Activated CD4-positive, alpha-beta memory T cell treated with anti-CD3 and anti-CD28 coated beads for 36 hours (primary cell): ENCODE measurements at regions of chr4 and their contacts with region 1.

Region 1: DNA sequence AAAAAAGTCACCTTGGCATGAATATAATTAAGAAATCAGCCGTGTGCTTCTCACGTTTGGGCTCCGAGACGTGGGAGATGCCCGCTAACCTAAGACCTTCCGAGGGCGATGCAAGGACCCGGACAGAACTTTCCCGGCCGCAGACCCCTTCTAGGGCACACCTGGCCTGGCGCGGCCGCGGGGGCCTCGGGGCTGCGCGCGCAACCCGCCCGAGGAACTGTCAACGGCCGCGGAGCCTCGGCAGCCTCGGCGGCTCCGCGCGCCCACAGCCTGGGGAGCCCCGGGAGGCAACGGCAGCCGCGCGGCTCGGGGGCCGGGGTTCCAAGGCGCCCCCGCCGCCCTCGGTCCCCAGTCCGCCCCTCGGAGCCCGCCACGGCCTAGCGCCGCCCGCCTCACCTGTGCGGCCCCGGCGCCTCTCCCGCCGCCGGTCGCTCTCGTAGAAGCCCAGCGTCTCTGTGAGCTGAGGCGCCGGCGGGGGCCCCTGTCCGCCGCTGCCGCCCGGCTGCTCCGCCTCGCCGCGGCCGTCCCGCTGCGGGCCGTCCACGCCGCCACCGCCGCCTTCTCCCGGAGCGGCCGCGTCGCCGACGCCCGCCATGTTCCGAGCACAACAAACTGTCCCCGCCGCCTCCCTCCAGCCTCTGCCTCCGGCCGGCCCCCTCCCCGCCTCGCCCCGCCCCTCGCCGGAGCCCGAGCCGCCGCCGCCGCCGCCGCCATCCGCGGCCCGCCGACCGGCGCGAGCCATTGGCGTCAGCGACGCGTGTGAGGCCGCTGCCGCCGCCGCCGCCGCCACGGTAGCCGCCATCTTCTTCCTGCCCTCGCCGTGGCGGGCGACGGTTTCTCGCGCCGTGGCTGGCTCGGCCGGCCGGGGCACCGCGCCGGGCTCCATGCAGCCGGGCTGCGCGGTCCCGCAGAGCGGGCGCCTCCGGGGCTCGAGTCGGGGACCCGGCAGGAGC is at the start of gene TAPT1:
- DNase-seq: peak; percentile 87
- H3K4me3 Mint-ChIP-seq: peak within 1 kb of the TSS; percentile 94
- H3K27ac Mint-ChIP-seq: peak within 1 kb of the TSS; percentile 96
- H3K4me1 Mint-ChIP-seq: peaks cover 60% of the 10 kb centered on the region
- H3K27me3 Mint-ChIP-seq: no peaks in the 10 kb centered on the region
- total RNA-seq, gene TAPT1: 35.6 TPM

Region 2: GRCh38 chr4:17336524-17336961 is 1110.4 kb after region 1 on chr4:
- CTCF ChIA-PET with region 1: no interaction called
- POLR2A ChIA-PET with region 1: no interaction called
- intact Hi-C with region 1: loop called (anchors 2 kb)
- DNase-seq: peak; percentile 87
- H3K4me3 Mint-ChIP-seq: peak overlapping the region; percentile 44
- H3K27ac Mint-ChIP-seq: peak overlapping the region; percentile 75
- H3K4me1 Mint-ChIP-seq: peaks cover 33% of the 10 kb centered on the region
- H3K27me3 Mint-ChIP-seq: no peaks in the 10 kb centered on the region